ENCODE measurements at regions of chr19 and their contacts with region 1.

Region 1: GRCh38 chr19:16714702-16715287 is 4.9 kb upstream of the NWD1 start:
- DNase-seq: peak; percentile 77
- ATAC-seq: peak; percentile 19
- H3K4me3 ChIP-seq: no peak overlapping the region
- H3K4me3 Mint-ChIP-seq: peak overlapping the region; percentile 54
- H3K27ac ChIP-seq: peak overlapping the region in 1 of 2 donors; percentile 8
- H3K27ac Mint-ChIP-seq: peak overlapping the region; percentile 80
- H3K4me1 ChIP-seq: peaks cover 43 to 68% of the 10 kb centered on the region in 2 donors
- H3K4me1 Mint-ChIP-seq: peaks cover 42% of the 10 kb centered on the region
- H3K27me3 ChIP-seq: no peaks in the 10 kb centered on the region
- H3K27me3 Mint-ChIP-seq: no peaks in the 10 kb centered on the region
- CTCF ChIP-seq: peak; percentile 96

Region 2: GRCh38 chr19:16528073-16528472 is 186.7 kb before region 1 on chr19:
- CTCF ChIA-PET with region 1: no interaction called
- POLR2A ChIA-PET with region 1: no interaction called
- intact Hi-C with region 1: no loop called
- DNase-seq: peak; percentile 53
- ATAC-seq: peak; percentile 33
- H3K4me3 ChIP-seq: no peak overlapping the region
- H3K4me3 Mint-ChIP-seq: no peak overlapping the region
- H3K27ac ChIP-seq: no peak overlapping the region
- H3K27ac Mint-ChIP-seq: no peak overlapping the region
- H3K4me1 ChIP-seq: no peaks in the 10 kb centered on the region
- H3K4me1 Mint-ChIP-seq: no peaks in the 10 kb centered on the region
- H3K27me3 ChIP-seq: no peaks in the 10 kb centered on the region
- H3K27me3 Mint-ChIP-seq: no peaks in the 10 kb centered on the region
- CTCF ChIP-seq: peak; percentile 43

Region 3: GRCh38 chr19:16659831-16660708 is 54.7 kb before region 1 on chr19 and contains the start of gene SMIM7:
- CTCF ChIA-PET with region 1: interaction called, 8 read pairs
- POLR2A ChIA-PET with region 1: interaction called, 3 read pairs
- intact Hi-C with region 1: loop called (anchors 2 kb)
- DNase-seq: peak; percentile 100
- ATAC-seq: peak; percentile 93
- H3K4me3 ChIP-seq: peak within 1 kb of the TSS; percentile 62 to 89 (median 83)
- H3K4me3 Mint-ChIP-seq: peak within 1 kb of the TSS; percentile 99
- H3K27ac ChIP-seq: peak within 1 kb of the TSS; percentile 70 to 79
- H3K27ac Mint-ChIP-seq: peak within 1 kb of the TSS; percentile 97
- H3K4me1 ChIP-seq: peaks cover 26 to 42% of the 10 kb centered on the region in 2 donors
- H3K4me1 Mint-ChIP-seq: peaks cover 46% of the 10 kb centered on the region
- H3K27me3 ChIP-seq: no peaks in the 10 kb centered on the region
- H3K27me3 Mint-ChIP-seq: no peaks in the 10 kb centered on the region
- CTCF ChIP-seq: no peak
- total RNA-seq, gene SMIM7: 132 and 133 TPM in 2 replicates

Region 4: GRCh38 chr19:16737911-16738310 is 23.1 kb after region 1 on chr19:
- CTCF ChIA-PET with region 1: interaction called, 10 read pairs
- POLR2A ChIA-PET with region 1: no interaction called
- intact Hi-C with region 1: no loop called
- DNase-seq: no peak
- ATAC-seq: no peak
- H3K4me3 ChIP-seq: no peak overlapping the region
- H3K4me3 Mint-ChIP-seq: no peak overlapping the region
- H3K27ac ChIP-seq: no peak overlapping the region
- H3K27ac Mint-ChIP-seq: no peak overlapping the region
- H3K4me1 ChIP-seq: no peaks in the 10 kb centered on the region
- H3K4me1 Mint-ChIP-seq: no peaks in the 10 kb centered on the region
- H3K27me3 ChIP-seq: peaks cover 0 to 2% (median 0%) of the 10 kb centered on the region in 4 experiments
- H3K27me3 Mint-ChIP-seq: no peaks in the 10 kb centered on the region
- CTCF ChIP-seq: no peak

Region 5: GRCh38 chr19:16829010-16829821 is 114.4 kb after region 1 on chr19 and contains the start of gene SIN3B:
- CTCF ChIA-PET with region 1: interaction called, 4 read pairs
- POLR2A ChIA-PET with region 1: no interaction called
- intact Hi-C with region 1: loop called (anchors 5 kb)
- DNase-seq: peak; percentile 97
- ATAC-seq: peak; percentile 90
- H3K4me3 ChIP-seq: peak within 1 kb of the TSS; percentile 35 to 78 (median 66)
- H3K4me3 Mint-ChIP-seq: peak within 1 kb of the TSS; percentile 87
- H3K27ac ChIP-seq: peak within 1 kb of the TSS; percentile 20 to 76
- H3K27ac Mint-ChIP-seq: peak within 1 kb of the TSS; percentile 84
- H3K4me1 ChIP-seq: peaks cover 29 to 34% of the 10 kb centered on the region in 2 donors
- H3K4me1 Mint-ChIP-seq: peaks cover 51% of the 10 kb centered on the region
- H3K27me3 ChIP-seq: peaks cover 0 to 17% (median 5%) of the 10 kb centered on the region in 4 experiments
- H3K27me3 Mint-ChIP-seq: peaks cover 31% of the 10 kb centered on the region
- CTCF ChIP-seq: no peak
- total RNA-seq, gene SIN3B: 118 and 131 TPM in 2 replicates

Region 6: DNA sequence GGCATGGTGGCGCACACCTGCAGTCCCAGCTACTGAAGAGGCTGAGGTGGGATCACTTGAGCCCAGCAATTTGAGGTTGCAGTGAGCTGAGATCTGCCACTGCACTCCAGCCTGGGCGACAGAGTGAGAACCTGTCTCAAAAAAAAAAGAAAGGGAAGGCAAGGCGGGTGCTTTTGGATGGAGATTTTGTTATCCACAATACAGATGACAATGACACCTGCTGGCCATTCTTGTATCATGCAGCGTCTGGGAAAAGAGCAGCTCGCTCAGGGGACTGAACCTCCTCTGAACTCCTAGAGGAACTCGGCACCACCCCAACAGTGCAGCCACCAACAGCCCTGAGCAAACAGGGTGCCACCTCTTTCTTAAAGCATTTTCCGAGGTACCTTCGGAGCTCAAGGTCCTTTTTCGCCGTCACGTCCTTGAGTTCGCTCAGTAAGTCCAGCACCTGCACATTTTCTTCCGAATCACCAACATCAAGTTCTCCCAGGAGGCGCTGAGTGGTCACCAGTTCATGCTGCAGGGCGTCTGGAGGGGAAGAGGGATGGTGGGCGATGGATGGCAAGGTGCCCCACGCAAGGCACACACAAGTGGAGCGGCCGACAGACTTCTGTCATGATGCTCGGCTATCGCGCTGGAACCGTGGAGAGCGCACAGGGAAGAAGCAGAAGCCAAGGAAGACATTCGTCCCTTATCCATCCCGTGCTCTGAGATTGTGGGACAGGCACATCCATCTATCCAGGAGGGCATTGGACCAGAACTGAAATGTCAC is 337.8 kb after region 1 on chr19:
- CTCF ChIA-PET with region 1: interaction called, 15 read pairs
- POLR2A ChIA-PET with region 1: no interaction called
- intact Hi-C with region 1: no loop called
- DNase-seq: peak; percentile 49
- ATAC-seq: no peak
- H3K4me3 ChIP-seq: no peak overlapping the region
- H3K4me3 Mint-ChIP-seq: no peak overlapping the region
- H3K27ac ChIP-seq: no peak overlapping the region
- H3K27ac Mint-ChIP-seq: no peak overlapping the region
- H3K4me1 ChIP-seq: no peaks in the 10 kb centered on the region
- H3K4me1 Mint-ChIP-seq: no peaks in the 10 kb centered on the region
- H3K27me3 ChIP-seq: no peaks in the 10 kb centered on the region
- H3K27me3 Mint-ChIP-seq: no peaks in the 10 kb centered on the region
- CTCF ChIP-seq: peak; percentile 53

Region 7: GRCh38 chr19:17183858-17184321 is 469.1 kb after region 1 on chr19:
- CTCF ChIA-PET with region 1: interaction called, 11 read pairs
- POLR2A ChIA-PET with region 1: no interaction called
- intact Hi-C with region 1: no loop called
- DNase-seq: peak; percentile 79
- ATAC-seq: peak; percentile 83
- H3K4me3 ChIP-seq: peak overlapping the region in 4 of 5 experiments; percentile 17 to 53 (median 33)
- H3K4me3 Mint-ChIP-seq: peak overlapping the region; percentile 85
- H3K27ac ChIP-seq: peak overlapping the region; percentile 66 to 76
- H3K27ac Mint-ChIP-seq: peak overlapping the region; percentile 88
- H3K4me1 ChIP-seq: peaks cover 19 to 25% of the 10 kb centered on the region in 2 donors
- H3K4me1 Mint-ChIP-seq: peaks cover 30% of the 10 kb centered on the region
- H3K27me3 ChIP-seq: no peaks in the 10 kb centered on the region
- H3K27me3 Mint-ChIP-seq: no peaks in the 10 kb centered on the region
- CTCF ChIP-seq: no peak

Region 8: DNA sequence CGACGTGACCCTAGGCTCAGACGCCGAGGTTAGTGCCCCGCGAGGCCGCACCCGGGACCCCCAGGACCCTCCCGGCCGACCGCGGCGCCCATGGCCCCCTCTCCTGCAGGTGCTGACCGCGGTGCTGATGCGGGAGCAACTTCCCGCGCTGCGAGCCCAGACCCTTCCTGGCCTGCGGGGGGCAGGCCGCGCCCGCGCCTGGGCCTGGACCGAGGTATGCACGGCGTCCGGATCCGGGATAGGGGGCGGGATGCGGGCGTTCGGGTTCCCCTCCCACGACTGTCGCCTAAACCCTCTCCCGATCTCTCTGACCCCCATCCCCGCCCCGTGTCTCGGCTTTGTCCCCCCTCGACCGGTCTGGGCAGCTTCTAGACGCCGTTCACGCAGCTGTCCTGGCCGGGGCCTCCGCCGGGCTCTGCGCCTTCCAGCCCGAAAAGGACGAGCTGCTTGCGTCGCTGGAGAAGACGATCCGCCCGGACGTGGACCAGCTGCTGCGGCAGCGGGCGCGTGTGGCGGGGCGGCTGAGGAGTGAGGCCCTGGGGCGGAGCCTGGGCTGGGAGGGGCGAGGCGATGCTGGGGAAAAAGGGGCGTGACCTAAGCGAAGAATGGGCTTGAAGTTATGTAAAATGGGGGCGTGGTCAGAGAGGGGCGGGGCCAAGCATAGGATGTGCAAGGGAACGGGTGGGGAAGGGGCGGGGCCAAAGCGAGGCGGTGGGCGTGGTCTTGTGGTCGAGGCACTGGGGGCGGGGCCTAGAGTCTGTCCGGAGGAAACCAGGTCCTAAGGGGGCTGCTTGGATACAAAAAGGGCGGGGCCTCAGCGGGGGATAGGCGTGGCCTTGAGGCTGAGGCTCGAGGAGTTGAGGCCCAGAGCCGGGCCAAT is 824.7 kb after region 1 on chr19:
- CTCF ChIA-PET with region 1: no interaction called
- POLR2A ChIA-PET with region 1: no interaction called
- intact Hi-C with region 1: loop called (anchors 5 kb)
- DNase-seq: peak; percentile 99
- ATAC-seq: peak; percentile 92
- H3K4me3 ChIP-seq: peak overlapping the region in 4 of 5 experiments; percentile 14 to 53 (median 40)
- H3K4me3 Mint-ChIP-seq: peak overlapping the region; percentile 93
- H3K27ac ChIP-seq: peak overlapping the region; percentile 54 to 59
- H3K27ac Mint-ChIP-seq: peak overlapping the region; percentile 97
- H3K4me1 ChIP-seq: peaks cover 26 to 46% of the 10 kb centered on the region in 2 donors
- H3K4me1 Mint-ChIP-seq: peaks cover 54% of the 10 kb centered on the region
- H3K27me3 ChIP-seq: no peaks in the 10 kb centered on the region
- H3K27me3 Mint-ChIP-seq: no peaks in the 10 kb centered on the region
- CTCF ChIP-seq: no peak